ENCODE measurements at regions of chr19 and their contacts with region 1.

Region 1: GRCh38 chr19:900302-901111 is 7.2 kb downstream of the RNU6-9 start:
- DNase-seq: peak in 2 of 10 donors; percentile 39 to 74
- ATAC-seq: peak; percentile 33 to 62
- H3K4me3 Mint-ChIP-seq: no peak overlapping the region
- H3K27ac Mint-ChIP-seq: peak overlapping the region in 5 of 10 donors; percentile 38 to 83 (median 51)
- H3K4me1 Mint-ChIP-seq: peaks cover 5 to 46% (median 15%) of the 10 kb centered on the region in 4 donors
- H3K27me3 Mint-ChIP-seq: peaks cover 0 to 3% (median 0%) of the 10 kb centered on the region in 5 donors

Region 2: DNA sequence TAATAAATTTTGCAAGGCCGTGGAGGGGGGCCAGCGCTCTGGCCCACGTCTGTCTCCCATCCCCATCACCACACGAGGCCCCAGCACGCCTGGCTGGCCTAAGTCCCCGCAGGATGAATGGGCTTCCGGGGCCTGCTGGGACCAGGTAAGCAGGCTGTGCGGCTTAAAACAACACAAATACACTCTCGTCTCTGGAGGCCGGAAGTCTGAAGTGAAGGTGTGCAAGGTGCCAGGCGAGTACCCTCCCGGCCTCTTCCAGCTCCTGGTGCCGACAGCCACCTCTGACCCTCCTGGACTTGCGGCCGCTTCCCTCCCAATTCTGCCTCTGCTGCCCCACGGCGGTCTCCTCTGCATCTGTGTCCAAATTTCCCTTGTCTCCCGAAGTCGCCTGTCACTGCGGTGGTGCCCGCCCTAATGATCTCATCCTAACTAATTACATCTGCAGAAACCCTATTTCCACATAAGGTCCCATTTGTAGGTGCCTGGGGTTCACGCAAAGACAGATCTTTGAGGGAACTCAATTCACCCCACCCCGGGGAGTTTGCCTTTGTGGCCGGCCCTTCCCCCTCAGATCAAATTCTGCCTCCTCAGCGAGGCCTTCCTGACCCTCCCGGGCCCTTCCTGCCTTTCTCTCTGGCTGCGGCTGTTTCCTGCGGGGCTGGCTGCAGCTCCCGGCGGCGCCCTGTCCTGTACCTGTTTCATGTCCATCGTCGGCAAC is 111.4 kb before region 1 on chr19:
- POLR2A ChIA-PET with region 1: no interaction called
- DNase-seq: no peak
- ATAC-seq: peak; percentile 22 to 58
- H3K4me3 Mint-ChIP-seq: peak overlapping the region in 3 of 10 donors; percentile 14 to 47 (median 42)
- H3K27ac Mint-ChIP-seq: peak overlapping the region in 6 of 10 donors; percentile 17 to 91 (median 72)
- H3K4me1 Mint-ChIP-seq: peaks cover 0 to 12% (median 7%) of the 10 kb centered on the region in 4 donors
- H3K27me3 Mint-ChIP-seq: peaks cover 0 to 14% (median 6%) of the 10 kb centered on the region in 5 donors

Region 3: GRCh38 chr19:805166-805551 is 95.3 kb before region 1 on chr19:
- POLR2A ChIA-PET with region 1: no interaction called
- DNase-seq: no peak
- ATAC-seq: no peak
- H3K4me3 Mint-ChIP-seq: peak overlapping the region in 1 of 10 donors; percentile 63
- H3K27ac Mint-ChIP-seq: no peak overlapping the region
- H3K4me1 Mint-ChIP-seq: peaks cover 18 to 47% (median 41%) of the 10 kb centered on the region in 4 donors
- H3K27me3 Mint-ChIP-seq: no peaks in the 10 kb centered on the region

Region 4: DNA sequence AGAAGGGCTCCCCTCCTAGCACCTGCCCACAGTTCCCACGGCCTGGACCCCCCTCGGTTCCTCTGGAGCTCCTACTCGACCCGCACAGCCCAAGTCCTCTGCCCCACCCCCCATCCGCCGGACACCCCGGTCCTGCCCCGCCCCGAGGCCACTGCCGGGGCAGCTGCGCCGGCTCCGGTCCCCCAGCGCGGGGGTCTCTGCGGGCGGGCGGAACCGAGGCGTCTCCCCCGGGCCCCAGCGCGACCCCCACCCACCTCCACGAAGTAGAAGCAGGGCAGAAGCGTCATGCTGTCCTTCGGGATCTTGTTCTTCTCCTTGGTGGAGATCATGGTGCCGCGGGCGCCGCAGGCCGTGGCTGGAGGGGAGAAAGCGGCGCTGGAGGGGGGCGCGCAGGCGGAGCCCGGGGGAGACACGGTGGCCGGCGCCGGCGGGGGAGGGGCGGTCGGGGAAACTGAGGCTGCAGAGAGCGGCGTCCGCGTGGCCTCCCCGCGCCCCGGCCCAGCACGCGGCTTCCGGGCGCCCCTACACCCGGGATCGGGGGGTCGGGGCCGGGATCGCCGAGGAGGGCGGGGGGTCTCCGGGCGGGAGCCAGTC is 79.2 kb before region 1 on chr19:
- POLR2A ChIA-PET with region 1: no interaction called
- DNase-seq: no peak
- ATAC-seq: peak; percentile 8 to 17
- H3K4me3 Mint-ChIP-seq: peak overlapping the region in 4 of 10 donors; percentile 56 to 74 (median 68)
- H3K27ac Mint-ChIP-seq: no peak overlapping the region
- H3K4me1 Mint-ChIP-seq: peaks cover 0 to 5% (median 3%) of the 10 kb centered on the region in 4 donors
- H3K27me3 Mint-ChIP-seq: peaks cover 3 to 21% (median 8%) of the 10 kb centered on the region in 5 donors

Region 5: DNA sequence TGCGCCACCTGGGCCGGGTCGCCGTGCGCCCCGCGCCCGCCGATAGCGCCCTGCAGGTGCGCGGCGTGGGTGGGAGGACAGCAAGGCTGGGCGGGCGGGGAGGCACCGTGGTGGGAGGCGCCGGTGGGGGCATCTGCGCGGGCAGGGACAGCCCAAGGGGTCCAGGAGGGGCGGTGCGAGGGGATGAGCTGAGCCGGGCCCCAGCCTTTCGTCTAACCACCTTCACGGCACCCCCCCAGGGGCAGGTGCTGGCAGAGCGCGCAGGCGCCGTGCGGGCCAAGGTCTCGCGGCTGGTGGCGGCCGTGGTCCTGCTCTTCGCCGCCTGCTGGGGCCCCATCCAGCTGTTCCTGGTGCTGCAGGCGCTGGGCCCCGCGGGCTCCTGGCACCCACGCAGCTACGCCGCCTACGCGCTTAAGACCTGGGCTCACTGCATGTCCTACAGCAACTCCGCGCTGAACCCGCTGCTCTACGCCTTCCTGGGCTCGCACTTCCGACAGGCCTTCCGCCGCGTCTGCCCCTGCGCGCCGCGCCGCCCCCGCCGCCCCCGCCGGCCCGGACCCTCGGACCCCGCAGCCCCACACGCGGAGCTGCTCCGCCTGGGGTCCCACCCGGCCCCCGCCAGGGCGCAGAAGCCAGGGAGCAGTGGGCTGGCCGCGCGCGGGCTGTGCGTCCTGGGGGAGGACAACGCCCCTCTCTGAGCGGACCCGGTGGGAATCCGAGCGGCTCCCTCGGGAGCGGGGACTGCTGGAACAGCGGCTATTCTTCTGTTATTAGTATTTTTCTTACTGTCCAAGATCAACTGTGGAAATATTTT is 19.8 kb after region 1 on chr19:
- POLR2A ChIA-PET with region 1: interaction called, 155 read pairs
- DNase-seq: peak in 9 of 10 donors; percentile 60 to 89 (median 71)
- ATAC-seq: peak; percentile 63 to 67
- H3K4me3 Mint-ChIP-seq: peak overlapping the region; percentile 67 to 90 (median 84)
- H3K27ac Mint-ChIP-seq: peak overlapping the region in 8 of 10 donors; percentile 17 to 90 (median 82)
- H3K4me1 Mint-ChIP-seq: peaks cover 11 to 34% (median 24%) of the 10 kb centered on the region in 4 donors
- H3K27me3 Mint-ChIP-seq: peaks cover 0 to 2% (median 0%) of the 10 kb centered on the region in 5 donors

Measured in naive thymus-derived CD8-positive, alpha-beta T cell (primary cell).